OCI-LY7 (cell line): ENCODE measurements at regions of chr16 and their contacts with region 1.

Region 1: DNA sequence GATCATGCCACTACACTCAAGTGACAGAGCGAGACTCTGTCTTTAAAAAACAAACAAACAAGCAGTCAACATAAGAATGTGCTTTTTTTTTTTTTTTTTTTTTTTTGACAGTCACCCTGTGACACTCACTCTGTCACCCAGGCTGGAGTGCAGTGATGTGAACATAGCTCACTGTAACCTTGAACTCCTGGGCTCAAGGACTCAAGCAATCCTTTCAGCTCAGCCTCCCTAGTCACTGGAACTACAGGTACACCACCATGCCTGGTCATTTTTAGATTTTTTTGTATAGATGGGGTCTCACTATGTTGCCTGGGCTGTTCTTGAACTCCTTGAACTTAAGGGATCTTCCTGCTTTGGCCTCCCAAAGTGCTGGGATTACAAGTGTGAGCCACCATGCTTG is 15.3 kb upstream of the CHP2 start:
- DNase-seq: no peak
- H3K4me3 ChIP-seq: no peak overlapping the region
- H3K27ac ChIP-seq: no peak overlapping the region
- H3K4me1 ChIP-seq: no peaks in the 10 kb centered on the region
- CTCF ChIP-seq: no peak

Region 2: GRCh38 chr16:24036614-24037013 is 297.1 kb after region 1 on chr16:
- CTCF ChIA-PET with region 1: no interaction called
- POLR2A ChIA-PET with region 1: no interaction called
- intact Hi-C with region 1: loop called (anchors 5 kb)
- DNase-seq: peak; percentile 55
- H3K4me3 ChIP-seq: no peak overlapping the region
- H3K27ac ChIP-seq: no peak overlapping the region
- H3K4me1 ChIP-seq: no peaks in the 10 kb centered on the region
- CTCF ChIP-seq: peak; percentile 81